ENCODE measurements at regions of chr19 and their contacts with region 1.

Region 1: GRCh38 chr19:7104747-7105447 is 35.4 kb downstream of the ZNF557 start:
- DNase-seq: peak in 1 of 2 donors; percentile 71
- ATAC-seq: no peak
- H3K4me3 ChIP-seq: no peak overlapping the region
- H3K27ac ChIP-seq: no peak overlapping the region
- H3K4me1 ChIP-seq: no peaks in the 10 kb centered on the region
- H3K27me3 ChIP-seq: no peaks in the 10 kb centered on the region

Region 2: DNA sequence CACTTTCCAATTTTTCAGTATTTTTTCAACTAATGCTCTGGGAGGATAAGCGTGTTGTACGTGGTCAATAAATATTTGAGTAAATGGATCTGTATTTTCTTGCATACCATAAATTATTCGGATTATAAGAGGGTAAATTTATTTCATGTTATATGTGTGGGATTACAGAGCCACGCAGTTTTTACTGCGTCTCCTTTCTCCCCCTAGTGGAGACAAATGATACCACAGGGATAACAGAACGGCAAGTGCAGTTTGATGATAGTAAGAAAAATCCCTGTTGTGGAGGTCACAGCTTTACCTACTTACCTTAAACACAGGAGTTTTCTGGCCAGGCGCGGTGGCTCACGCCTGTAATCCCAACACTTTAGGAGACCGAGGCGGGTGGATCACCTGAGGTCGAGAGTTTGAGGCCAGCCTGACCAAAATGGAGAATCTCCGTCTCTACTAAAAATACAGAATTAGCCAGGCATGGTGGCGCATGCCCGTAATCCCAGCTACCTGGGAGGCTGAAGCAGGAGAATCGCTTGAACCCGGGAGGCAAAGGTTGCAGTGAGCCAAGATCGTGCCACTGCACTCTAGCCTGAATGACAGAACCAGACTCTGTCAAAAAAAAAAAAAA is 100.5 kb before region 1 on chr19:
- intact Hi-C with region 1: no loop called
- DNase-seq: no peak
- ATAC-seq: no peak
- H3K4me3 ChIP-seq: no peak overlapping the region
- H3K27ac ChIP-seq: no peak overlapping the region
- H3K4me1 ChIP-seq: no peaks in the 10 kb centered on the region
- H3K27me3 ChIP-seq: no peaks in the 10 kb centered on the region

Region 3: DNA sequence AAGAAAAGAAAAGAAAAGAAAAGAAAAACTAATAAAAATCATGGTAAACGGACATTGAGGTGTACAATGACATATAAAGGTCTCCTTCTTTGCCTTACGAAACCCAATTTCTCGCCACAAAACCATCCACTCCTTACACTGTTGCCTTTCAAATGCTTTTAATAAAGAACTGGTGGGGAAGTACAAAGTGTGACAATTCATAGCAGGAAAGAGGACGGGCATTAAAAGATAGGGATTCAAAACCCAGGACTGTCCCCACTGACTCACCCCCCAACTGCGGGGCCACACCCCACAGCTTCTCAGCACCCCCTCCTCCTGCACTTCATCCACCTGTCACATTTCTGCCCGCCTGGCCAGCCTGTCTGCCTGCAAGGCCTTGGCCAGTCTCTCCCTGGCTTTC is 86.1 kb before region 1 on chr19:
- intact Hi-C with region 1: no loop called
- DNase-seq: no peak
- ATAC-seq: no peak
- H3K4me3 ChIP-seq: no peak overlapping the region
- H3K27ac ChIP-seq: no peak overlapping the region
- H3K4me1 ChIP-seq: no peaks in the 10 kb centered on the region
- H3K27me3 ChIP-seq: no peaks in the 10 kb centered on the region

Region 4: GRCh38 chr19:7145494-7146485 is 40.9 kb after region 1 on chr19:
- intact Hi-C with region 1: loop called (anchors 5 kb)
- DNase-seq: peak in 1 of 2 donors; percentile 12
- ATAC-seq: no peak
- H3K4me3 ChIP-seq: no peak overlapping the region
- H3K27ac ChIP-seq: no peak overlapping the region
- H3K4me1 ChIP-seq: no peaks in the 10 kb centered on the region
- H3K27me3 ChIP-seq: no peaks in the 10 kb centered on the region

Measured in aorta (tissue), 5 donors.